Activated CD4-positive, alpha-beta T cell treated with anti-CD3 and anti-CD28 coated beads, Interleukin-2, amount 10 ng/mL, durations not matched to agents 24 days and 14 days (primary cell): ENCODE measurements at regions of chrX and their contacts with region 1.

Region 1: DNA sequence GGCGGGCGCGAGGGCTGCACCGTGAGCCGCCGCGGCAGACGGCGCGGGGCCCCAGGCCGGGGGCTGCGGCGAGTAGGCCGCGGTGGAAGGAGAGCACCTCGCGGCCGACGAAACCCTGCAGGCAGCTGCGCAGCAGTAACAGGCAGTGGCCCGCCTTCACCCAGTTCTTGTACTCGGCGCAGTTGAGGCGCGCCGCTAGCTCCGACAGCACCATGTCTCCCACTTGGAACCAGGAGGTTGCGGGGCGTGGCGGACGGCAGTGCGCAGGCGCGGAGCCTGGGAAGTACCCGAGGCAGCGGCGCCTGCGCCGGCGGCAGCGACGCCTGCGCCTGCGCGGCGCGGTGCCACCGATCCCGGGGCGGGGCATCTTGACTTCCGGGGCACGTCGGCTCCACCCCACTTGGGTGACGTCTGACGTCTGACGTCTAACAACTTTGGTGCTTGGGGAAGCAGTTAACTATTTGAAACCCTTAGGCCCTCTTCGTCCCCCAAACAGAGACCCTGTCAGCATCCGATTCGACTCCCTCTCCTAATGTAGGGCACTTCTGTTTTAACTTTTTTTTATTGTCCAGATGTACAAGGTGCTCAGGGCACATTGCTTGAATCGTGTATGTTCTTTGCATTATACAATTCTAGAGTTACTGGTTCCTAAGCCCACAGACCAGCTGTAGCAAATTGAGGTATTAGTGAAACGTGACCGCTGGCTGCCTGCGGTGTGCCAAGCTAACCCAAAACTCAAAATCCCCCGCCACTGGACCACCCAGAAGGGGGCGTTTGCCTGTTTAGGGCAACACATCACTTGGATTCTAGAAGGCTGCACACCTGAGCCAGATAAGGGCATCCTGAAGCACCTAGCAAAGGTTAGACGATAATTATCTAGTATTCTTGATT is at the start of gene CXorf38:
- DNase-seq: peak; percentile 97
- H3K4me3 Mint-ChIP-seq: peak within 1 kb of the TSS; percentile 91
- H3K27ac Mint-ChIP-seq: peak within 1 kb of the TSS; percentile 92
- H3K4me1 Mint-ChIP-seq: peaks cover 21% of the 10 kb centered on the region
- H3K27me3 Mint-ChIP-seq: no peaks in the 10 kb centered on the region
- total RNA-seq, gene CXorf38: 16.6 and 16.8 TPM in 2 replicates

Region 2: DNA sequence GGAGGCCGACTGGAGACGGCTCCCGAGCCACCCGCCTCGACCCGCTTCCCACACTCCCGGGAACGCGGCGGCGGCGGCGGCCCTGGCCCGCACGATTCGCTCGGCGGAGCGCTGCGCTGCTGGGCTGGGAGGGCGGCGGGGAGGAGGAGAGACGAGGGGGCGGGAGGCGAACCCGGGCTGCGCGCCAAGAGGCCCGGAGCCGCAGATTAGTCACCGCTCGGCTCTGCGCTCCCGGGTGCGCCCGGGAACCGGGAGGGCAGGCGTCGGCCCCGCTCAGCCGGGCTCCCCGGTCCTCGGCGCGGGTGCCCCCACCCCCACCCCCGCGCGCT is 538.6 kb before region 1 on chrX:
- intact Hi-C with region 1: loop called (anchors 10 kb)
- DNase-seq: peak; percentile 84
- H3K4me3 Mint-ChIP-seq: peak overlapping the region; percentile 61
- H3K27ac Mint-ChIP-seq: no peak overlapping the region
- H3K4me1 Mint-ChIP-seq: peaks cover 9% of the 10 kb centered on the region
- H3K27me3 Mint-ChIP-seq: peaks cover 4% of the 10 kb centered on the region

Region 3: DNA sequence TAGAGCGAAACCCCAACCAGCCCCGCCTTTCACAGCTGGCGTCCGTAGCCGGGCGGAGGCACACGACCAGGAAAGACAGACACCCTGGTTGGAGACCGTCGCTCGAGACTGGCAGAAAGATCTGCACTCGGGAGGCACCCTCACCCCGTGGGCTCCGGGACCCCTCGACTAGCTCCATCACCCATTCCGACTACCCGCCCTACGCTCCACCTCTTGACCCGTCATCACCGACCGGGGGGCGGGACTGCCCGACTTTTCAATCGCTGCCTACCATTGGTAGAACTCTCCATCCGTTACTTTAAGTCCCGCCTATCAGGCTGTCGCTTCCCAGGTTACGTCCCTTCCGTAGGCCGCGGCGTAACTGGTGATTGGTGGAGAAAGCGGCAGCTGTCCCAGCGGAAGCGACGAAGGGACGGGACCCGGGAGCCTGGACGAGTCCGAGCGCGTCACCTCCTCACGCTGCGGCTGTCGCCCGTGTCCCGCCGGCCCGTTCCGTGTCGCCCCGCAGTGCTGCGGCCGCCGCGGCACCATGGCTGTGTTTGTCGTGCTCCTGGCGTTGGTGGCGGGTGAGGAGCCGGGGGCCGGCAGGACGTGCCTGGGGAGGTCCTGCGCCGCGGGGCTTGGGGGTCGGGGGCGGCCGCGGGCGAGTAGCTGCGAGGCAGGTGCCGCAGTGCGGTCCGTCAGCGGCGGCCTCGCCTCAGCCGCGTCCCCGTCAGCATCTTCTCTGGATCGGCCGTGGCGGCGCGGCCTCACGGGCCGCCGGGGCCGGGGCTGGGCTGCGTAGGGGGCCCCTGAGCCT is 66.8 kb before region 1 on chrX and contains the start of gene ATP6AP2:
- intact Hi-C with region 1: loop called (anchors 2 kb)
- DNase-seq: peak; percentile 97
- H3K4me3 Mint-ChIP-seq: peak within 1 kb of the TSS; percentile 91
- H3K27ac Mint-ChIP-seq: peak within 1 kb of the TSS; percentile 95
- H3K4me1 Mint-ChIP-seq: peaks cover 19% of the 10 kb centered on the region
- H3K27me3 Mint-ChIP-seq: no peaks in the 10 kb centered on the region
- total RNA-seq, gene ATP6AP2: 66.5 and 68.7 TPM in 2 replicates

Region 4: GRCh38 chrX:40632199-40632598 is 15.4 kb before region 1 on chrX:
- intact Hi-C with region 1: no loop called
- DNase-seq: no peak
- H3K4me3 Mint-ChIP-seq: no peak overlapping the region
- H3K27ac Mint-ChIP-seq: peak overlapping the region; percentile 45
- H3K4me1 Mint-ChIP-seq: peaks cover 12% of the 10 kb centered on the region
- H3K27me3 Mint-ChIP-seq: no peaks in the 10 kb centered on the region

Region 5: GRCh38 chrX:40792433-40792832 is 144.9 kb after region 1 on chrX:
- intact Hi-C with region 1: loop called (anchors 1 kb)
- DNase-seq: no peak
- H3K4me3 Mint-ChIP-seq: no peak overlapping the region
- H3K27ac Mint-ChIP-seq: no peak overlapping the region
- H3K4me1 Mint-ChIP-seq: peaks cover 2% of the 10 kb centered on the region
- H3K27me3 Mint-ChIP-seq: peaks cover 4% of the 10 kb centered on the region

Region 6: GRCh38 chrX:41116948-41117347 is 469.4 kb after region 1 on chrX:
- intact Hi-C with region 1: loop called (anchors 5 kb)
- DNase-seq: peak; percentile 71
- H3K4me3 Mint-ChIP-seq: peak overlapping the region; percentile 58
- H3K27ac Mint-ChIP-seq: peak overlapping the region; percentile 78
- H3K4me1 Mint-ChIP-seq: peaks cover 48% of the 10 kb centered on the region
- H3K27me3 Mint-ChIP-seq: no peaks in the 10 kb centered on the region